Mammary epithelial cell (primary cell): ENCODE measurements at regions of chr15 and their contacts with region 1.

Region 1: GRCh38 chr15:79989682-79990081 is 18.7 kb upstream of the BCL2A1 start:
- DNase-seq: peak; percentile 31
- H3K4me3 ChIP-seq: no peak overlapping the region
- H3K27ac ChIP-seq: no peak overlapping the region
- H3K4me1 ChIP-seq: peaks cover 4% of the 10 kb centered on the region
- H3K27me3 ChIP-seq: no peaks in the 10 kb centered on the region
- CTCF ChIP-seq: no peak

Region 2: GRCh38 chr15:79339564-79340314 is 649.9 kb before region 1 on chr15:
- CTCF ChIA-PET with region 1: no interaction called
- dilution Hi-C with region 1: no loop called
- in situ Hi-C with region 1: loop called in 1 of 2 experiments (anchors 25 kb)
- intact Hi-C with region 1: loop called (anchors 10 kb)
- DNase-seq: peak; percentile 8
- H3K4me3 ChIP-seq: no peak overlapping the region
- H3K27ac ChIP-seq: no peak overlapping the region
- H3K4me1 ChIP-seq: no peaks in the 10 kb centered on the region
- H3K27me3 ChIP-seq: no peaks in the 10 kb centered on the region
- CTCF ChIP-seq: peak; percentile 92 to 95

Region 3: DNA sequence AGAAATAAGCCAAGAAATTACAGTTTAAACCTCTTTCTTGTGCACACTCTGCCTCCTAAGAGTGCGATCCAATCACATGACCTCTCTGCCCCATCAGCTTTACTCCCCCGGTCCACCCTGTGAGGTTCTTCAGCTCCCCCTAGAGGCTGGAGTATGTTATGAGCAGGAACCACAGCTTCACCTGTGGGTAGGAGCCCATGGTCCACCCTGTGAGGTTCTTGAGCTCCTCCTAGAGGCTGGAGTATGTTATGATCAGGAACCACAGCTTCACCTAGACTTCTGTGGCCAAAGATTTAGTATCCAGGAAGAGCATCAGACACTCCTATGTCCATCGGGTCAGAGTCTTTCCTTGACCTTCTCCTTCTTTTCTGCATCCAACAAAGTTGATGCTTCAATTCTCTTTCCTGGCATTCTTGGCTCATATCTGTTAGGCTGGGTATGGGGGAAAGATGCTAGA is 393.6 kb before region 1 on chr15:
- CTCF ChIA-PET with region 1: no interaction called
- dilution Hi-C with region 1: no loop called
- in situ Hi-C with region 1: no loop called
- intact Hi-C with region 1: loop called (anchors 1 kb)
- DNase-seq: peak; percentile 81
- H3K4me3 ChIP-seq: no peak overlapping the region
- H3K27ac ChIP-seq: no peak overlapping the region
- H3K4me1 ChIP-seq: no peaks in the 10 kb centered on the region
- H3K27me3 ChIP-seq: peaks cover 3% of the 10 kb centered on the region
- CTCF ChIP-seq: peak; percentile 99

Region 4: DNA sequence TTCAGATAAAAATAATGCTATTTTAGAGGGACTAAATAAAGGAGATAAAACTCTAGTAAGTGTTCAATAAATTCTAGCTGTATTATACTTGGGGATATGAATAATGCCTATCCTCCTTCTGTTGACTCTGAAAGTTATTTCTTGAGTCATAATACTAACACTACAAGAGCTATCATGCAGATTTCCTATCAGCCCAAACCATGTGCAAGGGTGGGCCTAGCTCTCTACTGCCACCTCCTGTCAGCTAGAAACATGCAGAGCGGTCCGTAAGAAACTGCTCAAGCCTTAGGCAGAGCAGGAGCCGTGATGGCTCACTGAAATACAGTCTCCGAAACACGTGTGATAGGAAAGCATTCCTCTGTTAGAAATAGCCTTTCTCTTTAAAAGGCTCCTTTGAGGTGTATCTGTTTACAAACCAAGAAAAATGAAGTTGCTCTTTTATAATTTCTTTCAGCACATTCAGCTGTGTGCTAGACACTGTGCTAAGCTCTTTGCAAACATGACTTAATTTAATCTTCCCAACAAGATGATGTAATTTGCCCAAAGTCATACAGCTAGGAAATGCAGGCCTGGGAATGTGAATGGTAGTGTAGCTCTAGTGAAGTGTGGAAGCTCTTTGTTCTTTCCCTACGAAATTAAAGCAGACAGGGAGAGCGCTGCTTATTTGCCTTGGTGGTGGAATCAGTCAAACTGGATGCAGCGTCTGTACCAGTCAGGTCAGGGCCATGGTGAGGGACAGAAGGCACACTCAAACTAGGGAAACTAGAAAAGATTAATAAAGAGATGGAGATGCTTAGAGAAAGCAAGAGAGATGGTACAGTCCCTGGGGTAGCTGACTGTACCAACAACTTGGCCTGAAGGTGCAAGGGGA is 136.0 kb before region 1 on chr15:
- CTCF ChIA-PET with region 1: interaction called, 3 read pairs
- dilution Hi-C with region 1: no loop called
- in situ Hi-C with region 1: no loop called
- intact Hi-C with region 1: loop called (anchors 1 kb)
- DNase-seq: peak; percentile 81
- H3K4me3 ChIP-seq: no peak overlapping the region
- H3K27ac ChIP-seq: no peak overlapping the region
- H3K4me1 ChIP-seq: peaks cover 13% of the 10 kb centered on the region
- H3K27me3 ChIP-seq: no peaks in the 10 kb centered on the region
- CTCF ChIP-seq: peak; percentile 99 to 100

Region 5: GRCh38 chr15:79923515-79924395 is 65.9 kb before region 1 on chr15:
- CTCF ChIA-PET with region 1: no interaction called
- dilution Hi-C with region 1: no loop called
- in situ Hi-C with region 1: no loop called
- intact Hi-C with region 1: loop called (anchors 2 kb)
- DNase-seq: peak; percentile 97
- H3K4me3 ChIP-seq: peak overlapping the region; percentile 92 to 99 (median 95)
- H3K27ac ChIP-seq: peak overlapping the region; percentile 78
- H3K4me1 ChIP-seq: no peaks in the 10 kb centered on the region
- H3K27me3 ChIP-seq: no peaks in the 10 kb centered on the region
- CTCF ChIP-seq: no peak

Region 6: GRCh38 chr15:80309769-80310384 is 320.2 kb after region 1 on chr15:
- CTCF ChIA-PET with region 1: no interaction called
- dilution Hi-C with region 1: no loop called
- in situ Hi-C with region 1: no loop called
- intact Hi-C with region 1: loop called (anchors 5 kb)
- DNase-seq: peak; percentile 6
- H3K4me3 ChIP-seq: no peak overlapping the region
- H3K27ac ChIP-seq: no peak overlapping the region
- H3K4me1 ChIP-seq: no peaks in the 10 kb centered on the region
- H3K27me3 ChIP-seq: no peaks in the 10 kb centered on the region
- CTCF ChIP-seq: peak; percentile 53 to 73